ENCODE measurements at regions of chr7 and their contacts with region 1.

Region 1: DNA sequence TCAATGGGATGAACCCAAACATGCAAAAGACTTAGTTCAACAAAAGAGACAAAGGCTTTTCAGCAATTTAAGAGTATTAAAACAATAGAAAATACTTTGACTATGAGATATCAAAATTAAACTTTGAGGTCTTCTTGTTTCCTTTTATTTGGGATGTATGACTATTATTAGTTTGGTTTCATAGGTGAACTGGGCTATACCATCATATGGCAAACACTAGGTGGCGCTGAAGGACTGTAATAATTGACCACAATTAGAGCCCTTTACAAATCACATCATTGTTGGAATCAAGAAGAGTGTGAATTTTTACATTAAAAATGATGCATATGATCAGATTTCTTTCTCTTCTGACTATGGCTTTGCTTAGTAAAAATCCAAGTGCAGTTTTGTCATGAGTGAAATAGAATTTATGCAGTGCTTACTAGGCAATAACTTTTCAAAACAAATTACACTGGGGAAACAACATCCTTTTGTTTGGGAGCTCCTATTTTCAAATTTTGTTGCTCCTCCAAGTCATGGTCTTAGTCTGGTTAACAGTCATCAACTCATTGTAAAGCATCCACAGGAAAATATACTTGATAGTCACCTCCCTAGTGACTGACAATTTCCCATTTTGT is 14.7 kb upstream of the NXPH1 start:
- DNase-seq: peak; percentile 19 to 49 (median 37)
- H3K4me3 ChIP-seq: no peak overlapping the region
- H3K4me3 Mint-ChIP-seq: no peak overlapping the region
- H3K27ac ChIP-seq: no peak overlapping the region
- H3K27ac Mint-ChIP-seq: no peak overlapping the region
- H3K4me1 ChIP-seq: no peaks in the 10 kb centered on the region
- H3K4me1 Mint-ChIP-seq: no peaks in the 10 kb centered on the region
- H3K27me3 ChIP-seq: no peaks in the 10 kb centered on the region
- H3K27me3 Mint-ChIP-seq: peaks cover 4 to 8% of the 10 kb centered on the region in 2 donors

Region 2: DNA sequence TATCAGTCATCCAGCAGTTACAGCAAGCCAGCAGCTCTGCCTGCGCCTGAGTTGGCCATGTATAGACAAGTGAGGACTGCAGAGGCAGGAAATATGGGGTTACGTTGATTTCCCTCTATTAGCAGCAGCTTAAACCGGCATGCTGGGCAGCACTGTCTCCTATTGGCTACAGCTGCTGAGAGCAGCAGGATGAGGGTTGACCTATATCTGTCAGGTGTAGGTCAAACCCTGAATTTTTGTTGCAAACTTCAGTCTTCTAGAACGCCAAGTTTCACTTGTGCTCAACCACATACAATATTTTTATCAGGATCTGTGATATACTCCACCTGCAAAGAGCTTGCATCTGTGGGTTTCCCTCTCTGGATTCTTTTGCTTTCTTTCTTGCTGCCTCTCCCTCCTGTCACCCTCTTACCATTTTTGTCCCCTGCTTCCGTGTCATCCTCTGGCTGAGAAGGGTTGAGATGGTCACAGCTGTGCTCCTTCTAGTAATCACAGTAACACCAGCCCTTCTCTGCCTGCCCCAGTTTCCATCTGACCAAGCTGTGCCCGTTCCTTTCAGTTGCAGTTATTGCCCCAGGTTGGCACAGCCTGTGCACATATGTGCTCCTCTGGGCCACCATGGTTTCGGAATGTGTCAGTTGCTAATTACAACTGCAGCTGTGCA is 474.0 kb before region 1 on chr7:
- CTCF ChIA-PET with region 1: no interaction called
- POLR2A ChIA-PET with region 1: no interaction called
- intact Hi-C with region 1: no loop called
- DNase-seq: peak; percentile 64 to 77 (median 75)
- H3K4me3 ChIP-seq: peak overlapping the region; percentile 26 to 29
- H3K4me3 Mint-ChIP-seq: peak overlapping the region; percentile 70 to 89 (median 82)
- H3K27ac ChIP-seq: peak overlapping the region; percentile 59
- H3K27ac Mint-ChIP-seq: peak overlapping the region; percentile 78 to 97 (median 90)
- H3K4me1 ChIP-seq: peaks cover 42% of the 10 kb centered on the region
- H3K4me1 Mint-ChIP-seq: peaks cover 21 to 51% (median 28%) of the 10 kb centered on the region in 4 donors
- H3K27me3 ChIP-seq: no peaks in the 10 kb centered on the region
- H3K27me3 Mint-ChIP-seq: no peaks in the 10 kb centered on the region

Region 3: GRCh38 chr7:10412422-10413019 is 1993.8 kb after region 1 on chr7:
- CTCF ChIA-PET with region 1: no interaction called
- POLR2A ChIA-PET with region 1: no interaction called
- intact Hi-C with region 1: loop called (anchors 2 kb)
- DNase-seq: peak in 3 of 5 donors; percentile 2 to 8 (median 6)
- H3K4me3 ChIP-seq: no peak overlapping the region
- H3K4me3 Mint-ChIP-seq: no peak overlapping the region
- H3K27ac ChIP-seq: no peak overlapping the region
- H3K27ac Mint-ChIP-seq: no peak overlapping the region
- H3K4me1 ChIP-seq: no peaks in the 10 kb centered on the region
- H3K4me1 Mint-ChIP-seq: no peaks in the 10 kb centered on the region
- H3K27me3 ChIP-seq: no peaks in the 10 kb centered on the region
- H3K27me3 Mint-ChIP-seq: no peaks in the 10 kb centered on the region